ENCODE measurements at regions of chr2 and their contacts with region 1.

Region 1: DNA sequence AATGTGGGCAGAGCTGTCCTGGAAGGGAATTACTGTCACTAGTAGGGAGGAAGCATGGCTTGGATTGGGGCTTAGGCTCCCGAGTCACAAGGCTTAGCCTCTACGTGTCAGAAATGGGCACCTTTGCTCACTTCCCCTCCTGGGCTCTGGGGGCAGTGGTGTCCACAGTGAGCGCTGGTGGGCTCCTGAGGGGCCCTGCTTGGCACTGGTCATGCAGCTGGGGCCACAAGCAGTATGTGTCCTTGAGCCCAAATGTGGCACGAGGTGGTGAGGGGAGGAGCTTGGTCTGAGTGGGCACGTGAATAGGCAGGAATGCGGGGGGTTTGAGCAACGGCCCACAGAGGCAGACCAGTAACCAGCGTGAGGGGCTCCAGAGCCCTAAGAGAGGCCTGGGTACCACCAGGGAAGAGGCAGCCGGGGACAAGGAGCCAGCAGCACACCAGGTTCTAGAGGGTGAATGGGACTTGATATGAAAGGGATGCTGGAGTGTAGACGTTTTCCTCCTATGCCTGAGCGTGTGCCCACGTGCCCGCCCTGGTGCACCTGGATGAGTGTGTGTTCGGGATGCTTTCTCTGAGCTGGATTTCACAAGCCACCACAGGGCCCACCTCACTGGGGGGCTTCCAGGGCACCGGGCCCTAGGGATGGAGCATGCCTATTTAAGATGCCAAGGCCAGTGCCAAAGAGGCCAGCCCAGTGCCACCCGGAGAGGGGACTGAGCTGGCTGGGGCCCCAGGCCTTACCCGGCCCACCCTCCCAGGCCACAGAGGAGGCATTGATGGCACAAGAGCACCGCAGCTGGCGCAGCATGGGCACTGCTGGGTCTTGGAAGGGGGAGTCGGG is 22.8 kb upstream of the PTMA start:
- DNase-seq: no peak
- H3K4me3 ChIP-seq: no peak overlapping the region
- H3K27ac ChIP-seq: no peak overlapping the region
- H3K4me1 ChIP-seq: no peaks in the 10 kb centered on the region
- H3K27me3 ChIP-seq: no peaks in the 10 kb centered on the region
- CTCF ChIP-seq: no peak

Region 2: GRCh38 chr2:231260442-231261208 is 424.9 kb before region 1 on chr2:
- intact Hi-C with region 1: no loop called
- DNase-seq: no peak
- H3K4me3 ChIP-seq: no peak overlapping the region
- H3K27ac ChIP-seq: no peak overlapping the region
- H3K4me1 ChIP-seq: peaks cover 4% of the 10 kb centered on the region
- H3K27me3 ChIP-seq: no peaks in the 10 kb centered on the region
- CTCF ChIP-seq: no peak

Region 3: GRCh38 chr2:231704032-231704431 is 18.5 kb after region 1 on chr2:
- intact Hi-C with region 1: loop called (anchors 2 kb)
- DNase-seq: no peak
- H3K4me3 ChIP-seq: no peak overlapping the region
- H3K27ac ChIP-seq: no peak overlapping the region
- H3K4me1 ChIP-seq: no peaks in the 10 kb centered on the region
- H3K27me3 ChIP-seq: no peaks in the 10 kb centered on the region
- CTCF ChIP-seq: no peak